ENCODE measurements at regions of chr12 and their contacts with region 1.

Region 1: DNA sequence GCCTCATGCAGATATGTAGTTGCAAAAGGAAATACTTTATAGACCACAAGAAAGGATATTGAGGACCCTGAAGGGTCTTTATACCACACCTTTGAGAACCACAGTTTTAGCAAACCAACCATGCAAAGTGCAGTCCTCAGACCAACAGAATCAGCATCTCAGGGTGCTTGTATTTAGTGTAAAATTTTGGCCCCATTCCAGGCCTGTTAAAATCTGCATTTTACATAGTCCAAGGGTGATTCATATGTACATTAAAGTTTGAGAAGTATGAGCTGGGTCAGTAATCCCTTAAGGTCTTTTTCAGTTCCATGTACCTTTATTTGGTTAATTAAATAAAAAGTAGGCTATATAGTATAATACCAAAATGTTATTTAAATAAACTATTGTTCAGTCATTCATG is 91.2 kb downstream of the WNK1 start:
- DNase-seq: no peak
- ATAC-seq: no peak
- H3K4me3 ChIP-seq: no peak overlapping the region
- H3K4me3 Mint-ChIP-seq: no peak overlapping the region
- H3K27ac ChIP-seq: no peak overlapping the region
- H3K27ac Mint-ChIP-seq: no peak overlapping the region
- H3K4me1 ChIP-seq: peaks cover 4% of the 10 kb centered on the region
- H3K4me1 Mint-ChIP-seq: peaks cover 63% of the 10 kb centered on the region
- H3K27me3 ChIP-seq: no peaks in the 10 kb centered on the region
- H3K27me3 Mint-ChIP-seq: no peaks in the 10 kb centered on the region
- CTCF ChIP-seq: no peak

Region 2: DNA sequence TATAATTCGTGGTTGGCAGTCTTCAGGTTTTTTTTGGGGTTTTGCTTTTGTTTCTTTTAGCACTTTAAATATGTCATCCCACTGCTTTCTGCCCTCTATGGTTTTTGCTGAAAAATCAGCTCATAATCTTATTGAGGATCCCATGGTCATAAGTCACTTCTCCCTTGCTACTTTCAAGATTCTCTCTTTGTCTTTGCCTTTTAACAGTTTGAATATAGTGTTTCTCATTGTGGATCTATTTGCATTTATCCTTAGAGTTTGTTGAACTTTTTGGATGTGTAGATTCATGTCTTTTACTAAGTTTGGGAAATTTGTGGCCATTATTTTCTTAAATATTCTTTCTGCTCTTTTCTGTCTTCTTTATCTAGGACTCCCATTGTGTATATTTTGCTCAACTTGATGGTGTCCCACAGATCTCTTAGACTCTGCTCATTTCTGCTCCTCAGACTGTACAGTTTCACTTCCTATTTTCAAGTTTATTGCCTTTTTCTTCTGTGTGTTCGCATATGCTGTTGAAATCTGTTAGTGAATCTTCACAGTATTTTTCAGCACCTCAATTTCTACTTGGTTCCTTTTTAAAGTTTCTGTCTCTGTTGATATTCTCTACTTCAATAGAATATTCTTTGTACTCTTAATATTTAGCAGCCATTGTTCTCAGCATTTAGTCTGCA is 20.4 kb before region 1 on chr12:
- CTCF ChIA-PET with region 1: no interaction called
- POLR2A ChIA-PET with region 1: no interaction called
- intact Hi-C with region 1: loop called in 1 of 2 experiments (anchors 2 kb)
- DNase-seq: no peak
- ATAC-seq: no peak
- H3K4me3 ChIP-seq: no peak overlapping the region
- H3K4me3 Mint-ChIP-seq: no peak overlapping the region
- H3K27ac ChIP-seq: no peak overlapping the region
- H3K27ac Mint-ChIP-seq: peak overlapping the region; percentile 1
- H3K4me1 ChIP-seq: no peaks in the 10 kb centered on the region
- H3K4me1 Mint-ChIP-seq: peaks cover 62% of the 10 kb centered on the region
- H3K27me3 ChIP-seq: no peaks in the 10 kb centered on the region
- H3K27me3 Mint-ChIP-seq: no peaks in the 10 kb centered on the region
- CTCF ChIP-seq: no peak